Activated CD4-positive, alpha-beta memory T cell treated with anti-CD3 and anti-CD28 coated beads for 36 hours (primary cell): ENCODE measurements at regions of chr3 and their contacts with region 1.

Region 1: GRCh38 chr3:136752422-136753325 is 496 bp upstream of the STAG1 start:
- DNase-seq: peak; percentile 99
- H3K4me3 Mint-ChIP-seq: peak overlapping the region; percentile 77
- H3K27ac Mint-ChIP-seq: peak overlapping the region; percentile 92
- H3K4me1 Mint-ChIP-seq: peaks cover 36% of the 10 kb centered on the region
- H3K27me3 Mint-ChIP-seq: no peaks in the 10 kb centered on the region

Region 2: DNA sequence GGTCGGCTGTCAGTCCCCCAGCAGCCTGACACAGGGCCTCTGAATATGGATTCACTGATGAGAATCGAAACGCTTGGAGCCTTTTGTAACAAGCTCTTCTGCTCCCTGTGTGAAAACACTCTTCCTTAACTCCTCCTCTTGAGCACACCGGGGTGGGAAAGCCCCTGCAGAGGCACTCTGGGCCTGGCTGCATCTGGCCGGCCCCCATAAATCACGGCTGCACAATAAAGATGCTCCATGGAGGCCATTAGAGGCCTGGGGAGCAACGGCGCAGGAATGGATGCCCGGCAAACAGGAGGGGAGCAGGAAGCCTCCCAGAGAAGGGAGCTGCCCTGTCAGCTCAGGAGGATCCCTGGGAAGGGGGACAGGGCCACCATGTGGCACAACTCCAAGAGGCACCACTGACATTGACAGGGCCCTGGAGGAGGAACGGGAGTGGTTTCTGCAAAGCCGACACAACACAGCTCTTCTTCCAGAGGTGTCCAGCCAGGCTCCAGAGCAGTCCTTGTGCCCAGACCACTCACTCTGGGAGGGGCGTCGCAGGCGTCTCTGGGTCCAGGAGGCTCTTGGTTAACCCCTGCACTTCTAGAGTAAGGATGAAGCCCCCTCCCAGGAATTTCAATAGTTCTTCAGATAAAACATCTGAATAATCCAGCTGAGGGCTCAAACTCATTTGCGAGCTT is 1296.4 kb before region 1 on chr3:
- CTCF ChIA-PET with region 1: no interaction called
- POLR2A ChIA-PET with region 1: no interaction called
- intact Hi-C with region 1: no loop called
- DNase-seq: no peak
- H3K4me3 Mint-ChIP-seq: no peak overlapping the region
- H3K27ac Mint-ChIP-seq: no peak overlapping the region
- H3K4me1 Mint-ChIP-seq: no peaks in the 10 kb centered on the region
- H3K27me3 Mint-ChIP-seq: no peaks in the 10 kb centered on the region

Region 3: GRCh38 chr3:136149667-136150066 is 603.0 kb before region 1 on chr3:
- CTCF ChIA-PET with region 1: no interaction called
- POLR2A ChIA-PET with region 1: no interaction called
- intact Hi-C with region 1: loop called (anchors 5 kb)
- DNase-seq: no peak
- H3K4me3 Mint-ChIP-seq: peak overlapping the region; percentile 17
- H3K27ac Mint-ChIP-seq: peak overlapping the region; percentile 88
- H3K4me1 Mint-ChIP-seq: peaks cover 69% of the 10 kb centered on the region
- H3K27me3 Mint-ChIP-seq: no peaks in the 10 kb centered on the region

Region 4: DNA sequence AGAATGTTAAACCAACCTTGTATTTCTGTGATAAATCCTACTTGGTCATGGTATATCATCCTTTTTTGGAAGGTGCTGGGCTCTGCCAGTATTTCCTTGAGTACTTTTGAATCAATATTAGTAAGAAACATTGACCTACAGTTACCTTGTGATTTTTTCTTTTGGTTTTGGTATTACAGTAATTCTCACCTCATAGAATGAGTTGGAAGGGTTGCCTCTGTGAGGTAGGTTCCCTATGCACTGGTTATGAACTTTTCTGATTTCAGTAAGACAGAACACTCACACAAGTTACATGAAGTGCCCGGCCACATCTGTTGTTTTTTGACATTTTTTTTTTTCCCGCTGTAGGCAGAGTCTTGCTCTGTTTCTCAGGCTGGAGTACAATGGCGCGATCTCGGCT is 482.5 kb before region 1 on chr3:
- CTCF ChIA-PET with region 1: no interaction called
- POLR2A ChIA-PET with region 1: no interaction called
- intact Hi-C with region 1: loop called (anchors 5 kb)
- DNase-seq: peak; percentile 28
- H3K4me3 Mint-ChIP-seq: no peak overlapping the region
- H3K27ac Mint-ChIP-seq: no peak overlapping the region
- H3K4me1 Mint-ChIP-seq: peaks cover 34% of the 10 kb centered on the region
- H3K27me3 Mint-ChIP-seq: no peaks in the 10 kb centered on the region

Region 5: GRCh38 chr3:136390574-136390973 is 362.1 kb before region 1 on chr3:
- CTCF ChIA-PET with region 1: interaction called, 74 read pairs
- POLR2A ChIA-PET with region 1: interaction called, 5 read pairs
- intact Hi-C with region 1: loop called (anchors 1 kb)
- DNase-seq: no peak
- H3K4me3 Mint-ChIP-seq: no peak overlapping the region
- H3K27ac Mint-ChIP-seq: no peak overlapping the region
- H3K4me1 Mint-ChIP-seq: peaks cover 1% of the 10 kb centered on the region
- H3K27me3 Mint-ChIP-seq: no peaks in the 10 kb centered on the region

Region 6: DNA sequence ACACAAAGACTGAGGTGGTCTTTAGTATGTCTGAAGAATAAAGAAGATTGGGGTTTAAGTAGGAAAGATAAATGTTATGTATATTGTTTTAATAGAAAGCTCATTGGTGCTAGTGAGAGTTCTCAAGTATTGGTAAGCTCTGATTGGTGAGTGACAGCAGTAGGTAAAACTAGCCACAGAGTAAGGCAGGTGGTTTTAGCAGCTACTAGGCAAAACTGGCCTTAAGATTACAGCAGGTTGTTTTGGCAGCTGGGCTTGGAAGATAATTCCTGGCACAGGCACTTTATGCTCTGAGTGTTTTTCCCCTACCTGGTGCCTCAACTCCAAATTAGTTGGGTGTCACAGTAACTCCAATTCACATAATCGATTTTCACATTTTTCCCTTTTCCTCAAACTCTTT is 66.8 kb before region 1 on chr3:
- CTCF ChIA-PET with region 1: no interaction called
- POLR2A ChIA-PET with region 1: no interaction called
- intact Hi-C with region 1: no loop called
- DNase-seq: no peak
- H3K4me3 Mint-ChIP-seq: no peak overlapping the region
- H3K27ac Mint-ChIP-seq: no peak overlapping the region
- H3K4me1 Mint-ChIP-seq: peaks cover 28% of the 10 kb centered on the region
- H3K27me3 Mint-ChIP-seq: no peaks in the 10 kb centered on the region

Region 7: GRCh38 chr3:136734382-136735070 is 18.1 kb before region 1 on chr3:
- CTCF ChIA-PET with region 1: interaction called, 20 read pairs
- POLR2A ChIA-PET with region 1: interaction called, 6 read pairs
- intact Hi-C with region 1: loop called (anchors 1 kb)
- DNase-seq: no peak
- H3K4me3 Mint-ChIP-seq: no peak overlapping the region
- H3K27ac Mint-ChIP-seq: no peak overlapping the region
- H3K4me1 Mint-ChIP-seq: peaks cover 55% of the 10 kb centered on the region
- H3K27me3 Mint-ChIP-seq: no peaks in the 10 kb centered on the region

Region 8: GRCh38 chr3:136861890-136862616 is 109.4 kb after region 1 on chr3 and contains the start of gene NCK1:
- CTCF ChIA-PET with region 1: interaction called, 52 read pairs
- POLR2A ChIA-PET with region 1: interaction called, 43 read pairs
- intact Hi-C with region 1: loop called (anchors 1 kb)
- DNase-seq: peak; percentile 99
- H3K4me3 Mint-ChIP-seq: peak within 1 kb of the TSS; percentile 94
- H3K27ac Mint-ChIP-seq: peak within 1 kb of the TSS; percentile 95
- H3K4me1 Mint-ChIP-seq: peaks cover 32% of the 10 kb centered on the region
- H3K27me3 Mint-ChIP-seq: no peaks in the 10 kb centered on the region
- total RNA-seq, gene NCK1: 32.3 to 38.0 TPM